Activated CD4-positive, alpha-beta T cell treated with anti-CD3 and anti-CD28 coated beads for 36 hours (primary cell): ENCODE measurements at regions of chr20 and their contacts with region 1.

Region 1: GRCh38 chr20:1734269-1734858 is 76.8 kb upstream of the SIRPG start:
- DNase-seq: peak; percentile 48
- ATAC-seq: peak; percentile 90
- H3K4me3 Mint-ChIP-seq: no peak overlapping the region
- H3K27ac Mint-ChIP-seq: peak overlapping the region; percentile 48
- H3K4me1 Mint-ChIP-seq: peaks cover 40% of the 10 kb centered on the region
- H3K27me3 Mint-ChIP-seq: peaks cover 1% of the 10 kb centered on the region

Region 2: DNA sequence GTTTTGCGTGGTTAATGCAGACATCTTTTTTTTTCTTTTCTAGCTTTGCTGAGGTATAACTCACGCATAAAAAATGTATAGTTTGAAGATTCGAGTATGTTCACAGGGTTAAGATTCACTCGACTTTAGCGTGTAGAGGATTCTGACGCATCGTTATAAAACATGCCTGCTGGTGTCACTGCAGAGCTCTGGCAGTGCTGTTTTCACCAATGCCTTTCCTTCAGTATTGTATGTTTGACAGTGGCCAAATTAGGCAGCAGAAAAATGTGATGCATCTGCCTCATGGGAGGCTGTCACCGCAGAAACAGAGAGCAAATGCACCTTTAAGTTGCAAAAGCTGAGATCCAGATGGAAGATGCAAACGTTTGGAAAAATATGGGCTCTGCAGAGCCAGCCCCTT is 225.1 kb before region 1 on chr20:
- CTCF ChIA-PET with region 1: interaction called, 6 read pairs
- POLR2A ChIA-PET with region 1: no interaction called
- intact Hi-C with region 1: loop called (anchors 1 kb)
- DNase-seq: peak; percentile 52
- ATAC-seq: peak; percentile 93
- H3K4me3 Mint-ChIP-seq: no peak overlapping the region
- H3K27ac Mint-ChIP-seq: no peak overlapping the region
- H3K4me1 Mint-ChIP-seq: no peaks in the 10 kb centered on the region
- H3K27me3 Mint-ChIP-seq: peaks cover 8% of the 10 kb centered on the region

Region 3: DNA sequence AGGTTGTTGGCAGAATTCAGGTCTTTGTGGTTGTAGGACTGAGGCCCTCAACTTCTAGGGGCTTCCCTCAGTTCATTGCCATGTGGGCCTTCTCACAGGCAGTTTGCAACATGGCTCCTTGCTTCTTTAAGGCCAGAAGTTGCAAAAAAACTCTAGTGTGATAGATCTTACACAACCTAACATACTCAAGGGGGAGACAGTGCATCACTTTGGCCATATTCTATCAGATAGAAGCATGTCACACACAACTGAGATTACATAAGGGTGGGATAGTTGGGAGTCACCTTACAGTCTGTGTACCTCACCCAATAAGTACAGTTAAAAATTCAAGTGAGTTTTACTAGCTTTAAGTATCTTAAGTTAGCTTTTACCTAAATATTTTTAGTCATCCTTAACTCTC is 178.4 kb before region 1 on chr20:
- CTCF ChIA-PET with region 1: interaction called, 4 read pairs
- POLR2A ChIA-PET with region 1: no interaction called
- intact Hi-C with region 1: loop called (anchors 1 kb)
- DNase-seq: no peak
- ATAC-seq: no peak
- H3K4me3 Mint-ChIP-seq: no peak overlapping the region
- H3K27ac Mint-ChIP-seq: no peak overlapping the region
- H3K4me1 Mint-ChIP-seq: peaks cover 3% of the 10 kb centered on the region
- H3K27me3 Mint-ChIP-seq: no peaks in the 10 kb centered on the region

Region 4: GRCh38 chr20:1631309-1632151 is 102.8 kb before region 1 on chr20:
- CTCF ChIA-PET with region 1: no interaction called
- POLR2A ChIA-PET with region 1: no interaction called
- intact Hi-C with region 1: loop called in 1 of 2 experiments (anchors 5 kb)
- DNase-seq: no peak
- ATAC-seq: no peak
- H3K4me3 Mint-ChIP-seq: peak overlapping the region; percentile 15
- H3K27ac Mint-ChIP-seq: peak overlapping the region; percentile 74
- H3K4me1 Mint-ChIP-seq: peaks cover 60% of the 10 kb centered on the region
- H3K27me3 Mint-ChIP-seq: no peaks in the 10 kb centered on the region

Region 5: DNA sequence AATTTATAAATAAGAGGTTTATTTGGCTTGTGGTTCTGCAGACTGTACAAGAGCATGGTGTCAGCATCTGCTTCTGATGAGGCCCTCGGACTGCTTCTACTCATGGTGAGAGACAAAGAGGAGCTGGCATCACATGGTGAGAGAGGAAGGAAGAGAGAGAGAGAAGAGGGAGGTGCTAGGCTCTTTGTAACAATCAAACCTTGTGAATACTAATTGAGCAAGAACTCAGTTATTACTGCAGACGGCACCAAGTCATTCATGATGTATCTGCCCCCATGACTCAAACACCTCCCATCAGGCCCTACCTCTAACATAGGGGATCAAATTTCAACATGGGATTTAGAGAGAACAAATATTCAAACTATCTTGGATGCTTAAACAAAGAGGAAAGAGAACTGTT is 70.4 kb before region 1 on chr20:
- CTCF ChIA-PET with region 1: no interaction called
- POLR2A ChIA-PET with region 1: no interaction called
- intact Hi-C with region 1: loop called (anchors 5 kb)
- DNase-seq: peak; percentile 46
- ATAC-seq: peak; percentile 55
- H3K4me3 Mint-ChIP-seq: peak overlapping the region; percentile 47
- H3K27ac Mint-ChIP-seq: peak overlapping the region; percentile 98
- H3K4me1 Mint-ChIP-seq: peaks cover 96% of the 10 kb centered on the region
- H3K27me3 Mint-ChIP-seq: no peaks in the 10 kb centered on the region